ENCODE measurements at regions of chr3 and their contacts with region 1.

Region 1: GRCh38 chr3:52056968-52057805 is 816 bp upstream of the DUSP7 start:
- DNase-seq: peak; percentile 99 to 100
- ATAC-seq: peak; percentile 88 to 93 (median 90)
- H3K4me3 ChIP-seq: peak overlapping the region; percentile 61 to 93 (median 70)
- H3K27ac ChIP-seq: peak overlapping the region; percentile 4 to 97 (median 90)
- H3K4me1 ChIP-seq: peaks cover 7 to 58% (median 40%) of the 10 kb centered on the region in 9 donors
- H3K27me3 ChIP-seq: no peaks in the 10 kb centered on the region
- CTCF ChIP-seq: peak in 3 of 9 donors; percentile 23 to 40 (median 33)

Region 2: DNA sequence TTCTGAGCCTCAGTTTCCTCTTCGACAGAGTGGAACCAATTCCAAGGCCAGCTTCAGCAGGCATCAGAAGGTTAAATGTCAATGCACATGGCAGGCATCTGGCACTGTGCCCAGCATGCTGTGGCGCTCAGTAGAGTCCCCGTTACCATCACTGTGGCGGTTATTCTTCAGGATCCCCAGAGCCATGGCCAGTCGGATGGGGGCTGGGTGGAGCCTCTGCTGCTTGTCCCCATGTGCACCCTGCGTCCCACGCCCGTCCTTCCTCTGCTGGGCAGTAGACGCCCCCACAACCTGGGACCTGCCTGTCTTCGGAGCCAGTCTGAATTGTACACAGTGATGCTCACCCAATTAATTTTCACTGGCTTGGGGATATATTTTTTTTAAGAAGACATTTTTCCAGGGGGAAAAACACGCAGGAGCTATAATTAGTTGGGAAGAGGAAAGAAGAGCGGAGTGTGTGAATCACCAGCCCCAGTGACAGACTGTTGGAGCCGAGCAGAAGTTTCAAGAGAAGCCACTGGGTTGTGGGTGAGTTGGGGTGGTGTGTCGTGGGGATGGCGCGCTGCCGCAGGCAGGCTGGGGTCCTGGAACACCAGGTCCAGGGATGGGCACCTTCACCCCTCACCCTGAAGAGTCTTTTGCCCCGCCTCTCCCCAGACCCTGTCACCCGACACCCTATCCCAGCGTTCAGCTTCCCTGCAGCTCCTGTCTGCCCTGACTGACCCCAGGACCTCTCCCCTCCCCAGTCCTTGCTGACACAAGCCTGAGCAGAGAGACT is 34.7 kb before region 1 on chr3:
- intact Hi-C with region 1: loop called in 2 of 10 experiments (anchors 1 to 2 kb)
- DNase-seq: peak; percentile 68 to 76
- ATAC-seq: peak; percentile 28 to 74 (median 52)
- H3K4me3 ChIP-seq: peak overlapping the region in 9 of 10 donors; percentile 16 to 58 (median 47)
- H3K27ac ChIP-seq: peak overlapping the region; percentile 79 to 97 (median 92)
- H3K4me1 ChIP-seq: peaks cover 62 to 91% (median 85%) of the 10 kb centered on the region in 9 donors
- H3K27me3 ChIP-seq: no peaks in the 10 kb centered on the region
- CTCF ChIP-seq: no peak

Region 3: DNA sequence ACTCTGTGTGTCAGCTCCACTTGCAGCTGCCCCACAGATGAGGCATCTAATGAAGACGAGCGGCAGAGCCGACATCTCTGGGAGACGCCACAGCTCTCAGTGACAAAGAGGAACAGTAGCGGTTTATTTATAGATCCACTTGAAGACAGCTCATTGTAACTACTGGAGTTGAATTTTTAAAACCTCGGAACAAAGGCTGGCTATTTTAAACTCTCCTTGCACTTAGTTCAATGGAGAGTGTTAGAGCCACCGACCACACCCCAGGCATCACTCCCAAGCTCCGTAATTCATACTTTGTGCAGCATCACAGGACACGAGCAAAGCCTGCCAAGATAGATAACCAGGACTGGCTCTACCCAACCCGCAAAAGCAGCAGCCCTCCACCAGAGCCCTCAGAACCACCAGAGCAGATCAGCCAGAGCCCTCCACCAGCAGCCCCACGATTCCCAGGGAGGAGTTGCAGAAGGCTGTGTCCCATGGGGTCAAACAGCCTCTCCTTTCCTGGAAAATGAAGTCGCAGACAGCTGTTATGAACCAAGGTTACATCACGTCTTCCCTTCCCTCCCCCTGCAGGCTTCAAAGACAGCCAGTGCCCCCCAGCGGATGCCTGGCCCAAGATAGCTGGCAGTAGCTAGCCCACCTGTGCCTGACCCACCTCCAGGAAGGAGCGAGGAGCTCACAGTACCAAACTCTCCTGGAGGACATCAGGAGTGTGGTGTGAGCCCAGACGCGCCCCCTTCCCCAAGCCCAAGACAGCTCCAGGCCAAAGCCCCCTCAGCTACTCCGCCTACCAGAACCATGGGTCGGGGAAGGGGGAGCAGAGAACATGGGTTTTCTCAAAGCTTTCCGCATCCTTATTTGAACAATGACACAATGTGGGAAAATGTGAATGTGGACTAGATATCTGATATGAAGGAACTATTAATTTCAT is 51.4 kb after region 1 on chr3:
- intact Hi-C with region 1: loop called in 6 of 10 experiments (anchors 2 to 5 kb)
- DNase-seq: peak; percentile 51 to 79
- ATAC-seq: peak; percentile 71 to 92 (median 83)
- H3K4me3 ChIP-seq: peak overlapping the region in 5 of 10 donors; percentile 18 to 38 (median 29)
- H3K27ac ChIP-seq: peak overlapping the region; percentile 21 to 85 (median 70)
- H3K4me1 ChIP-seq: peaks cover 0 to 46% (median 39%) of the 10 kb centered on the region in 9 donors
- H3K27me3 ChIP-seq: no peaks in the 10 kb centered on the region
- CTCF ChIP-seq: peak in 8 of 9 donors; percentile 27 to 74 (median 56)

Region 4: GRCh38 chr3:52123106-52123725 is 66.0 kb after region 1 on chr3:
- intact Hi-C with region 1: loop called in 9 of 10 experiments (anchors 1 to 5 kb)
- DNase-seq: peak; percentile 77 to 83
- ATAC-seq: peak; percentile 69 to 89 (median 84)
- H3K4me3 ChIP-seq: no peak overlapping the region
- H3K27ac ChIP-seq: peak overlapping the region in 9 of 10 donors; percentile 41 to 91 (median 86)
- H3K4me1 ChIP-seq: peaks cover 15 to 50% (median 34%) of the 10 kb centered on the region in 9 donors
- H3K27me3 ChIP-seq: no peaks in the 10 kb centered on the region
- CTCF ChIP-seq: peak; percentile 93 to 99 (median 97)

Region 5: DNA sequence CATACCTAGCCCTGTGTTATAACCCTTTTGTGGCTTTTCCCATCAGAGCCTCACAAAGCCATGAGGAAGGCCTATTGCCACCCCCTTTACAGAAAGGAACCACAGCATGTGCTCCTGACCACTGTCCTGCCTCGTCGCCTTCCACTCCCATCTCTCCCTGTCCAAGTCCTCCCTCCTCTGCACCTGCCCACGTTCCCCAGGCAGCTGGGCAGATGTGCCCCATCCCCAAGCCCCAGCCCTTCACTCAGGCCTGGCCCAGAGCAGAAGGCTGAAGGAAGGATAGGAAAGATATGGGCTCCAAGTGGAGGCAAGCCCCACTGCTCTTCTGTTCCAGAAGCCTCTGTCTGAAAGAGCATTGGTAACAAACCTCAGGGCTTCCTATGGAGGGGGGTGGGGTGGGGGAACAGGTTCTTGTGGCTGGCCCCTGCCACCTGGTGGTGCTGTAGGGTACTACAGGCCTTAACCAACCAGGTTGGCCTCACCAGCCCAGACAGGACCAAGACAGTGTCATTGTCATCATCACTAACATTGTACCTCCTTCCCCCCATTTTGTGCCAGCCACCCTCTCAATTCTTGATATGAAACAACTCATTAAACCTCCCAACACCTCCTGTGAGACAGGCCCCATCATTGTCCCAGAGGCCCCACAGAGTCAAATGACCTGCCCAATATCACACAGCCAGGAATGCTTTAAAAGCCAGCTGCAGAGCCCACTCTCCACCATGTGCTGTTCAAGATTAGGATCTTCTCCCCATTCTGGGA is 87.0 kb after region 1 on chr3:
- intact Hi-C with region 1: loop called in 5 of 10 experiments (anchors 1 to 5 kb)
- DNase-seq: peak; percentile 79 to 88
- ATAC-seq: peak; percentile 67 to 89 (median 81)
- H3K4me3 ChIP-seq: no peak overlapping the region
- H3K27ac ChIP-seq: no peak overlapping the region
- H3K4me1 ChIP-seq: peaks cover 0 to 21% (median 4%) of the 10 kb centered on the region in 9 donors
- H3K27me3 ChIP-seq: no peaks in the 10 kb centered on the region
- CTCF ChIP-seq: peak; percentile 96 to 99 (median 97)

Measured in heart right ventricle (tissue), 16 donors.